IMR-90 (cell line): ENCODE measurements at regions of chr11 and their contacts with region 1.

Region 1: DNA sequence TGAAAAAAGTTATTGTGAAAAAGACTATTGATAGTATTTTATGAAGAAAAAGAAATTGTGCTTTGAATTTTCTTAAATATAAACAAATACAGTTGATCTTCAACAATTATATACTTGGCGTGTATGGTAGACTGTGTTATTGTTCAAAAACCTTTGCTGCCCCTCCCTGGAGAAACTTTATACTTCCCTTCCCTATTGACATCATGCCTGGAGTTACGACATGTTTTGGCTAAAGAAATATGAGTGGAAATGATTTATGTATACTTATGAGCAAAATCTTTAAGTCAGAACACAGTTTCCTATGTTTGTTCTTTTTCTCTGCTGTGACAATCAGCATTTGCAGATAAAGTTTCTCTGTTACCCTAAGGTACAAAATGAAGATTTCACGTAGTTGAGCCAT is 243.8 kb downstream of the TMEM135 start:
- DNase-seq: peak; percentile 77
- ATAC-seq: peak; percentile 83
- H3K4me3 ChIP-seq: no peak overlapping the region
- H3K27ac ChIP-seq: no peak overlapping the region
- H3K4me1 ChIP-seq: no peaks in the 10 kb centered on the region
- H3K27me3 ChIP-seq: no peaks in the 10 kb centered on the region
- CTCF ChIP-seq: peak; percentile 57
- POLR2A ChIP-seq: no peak
- RAD21 ChIP-seq: peak; percentile 62

Region 2: GRCh38 chr11:87193756-87194470 is 87.6 kb before region 1 on chr11:
- CTCF ChIA-PET with region 1: no interaction called
- POLR2A ChIA-PET with region 1: no interaction called
- dilution Hi-C with region 1: no loop called
- in situ Hi-C with region 1: no loop called
- intact Hi-C with region 1: loop called (anchors 5 kb)
- DNase-seq: no peak
- ATAC-seq: no peak
- H3K4me3 ChIP-seq: no peak overlapping the region
- H3K27ac ChIP-seq: no peak overlapping the region
- H3K4me1 ChIP-seq: no peaks in the 10 kb centered on the region
- H3K27me3 ChIP-seq: no peaks in the 10 kb centered on the region
- CTCF ChIP-seq: no peak
- POLR2A ChIP-seq: no peak
- RAD21 ChIP-seq: no peak